B cell (primary cell): ENCODE measurements at regions of chr19 and their contacts with region 1.

Region 1: DNA sequence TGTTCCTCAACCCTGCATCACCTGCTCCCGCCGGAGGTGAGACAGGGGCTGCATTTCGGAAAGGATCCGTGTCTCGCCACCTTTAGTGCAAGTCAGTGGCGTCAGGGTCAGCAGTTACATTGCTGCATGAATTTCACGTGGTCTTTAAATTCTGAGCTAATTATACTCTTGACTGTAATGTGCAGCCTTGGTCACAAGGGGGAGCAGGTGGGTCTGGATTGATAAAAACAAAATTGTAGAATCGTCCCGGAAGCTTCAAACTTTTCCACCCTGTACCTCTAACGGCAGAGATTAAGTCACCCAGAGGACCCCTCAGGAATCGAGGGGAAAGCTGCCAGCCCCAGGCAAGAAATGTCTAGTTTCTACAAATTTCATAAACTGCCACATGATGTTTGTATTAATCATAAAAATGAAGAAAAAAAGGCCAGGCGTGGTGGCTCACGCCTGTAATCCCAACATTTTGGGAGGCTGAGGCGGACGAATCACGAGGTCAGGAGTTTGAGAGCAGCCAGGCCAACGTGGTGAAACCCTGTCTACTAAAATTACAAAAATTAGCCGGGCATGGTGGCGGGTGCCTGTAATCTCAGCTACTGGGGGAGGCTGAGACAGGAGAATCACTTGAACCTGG is 20.2 kb downstream of the BBC3 start:
- DNase-seq: peak; percentile 85
- ATAC-seq: peak; percentile 93
- H3K4me3 ChIP-seq: no peak overlapping the region
- H3K4me3 Mint-ChIP-seq: no peak overlapping the region
- H3K27ac ChIP-seq: peak overlapping the region in 1 of 2 donors; percentile 31
- H3K27ac Mint-ChIP-seq: peak overlapping the region; percentile 23
- H3K4me1 ChIP-seq: peaks cover 6 to 8% of the 10 kb centered on the region in 2 donors
- H3K4me1 Mint-ChIP-seq: peaks cover 6% of the 10 kb centered on the region
- H3K27me3 ChIP-seq: no peaks in the 10 kb centered on the region
- H3K27me3 Mint-ChIP-seq: no peaks in the 10 kb centered on the region
- CTCF ChIP-seq: peak; percentile 84

Region 2: DNA sequence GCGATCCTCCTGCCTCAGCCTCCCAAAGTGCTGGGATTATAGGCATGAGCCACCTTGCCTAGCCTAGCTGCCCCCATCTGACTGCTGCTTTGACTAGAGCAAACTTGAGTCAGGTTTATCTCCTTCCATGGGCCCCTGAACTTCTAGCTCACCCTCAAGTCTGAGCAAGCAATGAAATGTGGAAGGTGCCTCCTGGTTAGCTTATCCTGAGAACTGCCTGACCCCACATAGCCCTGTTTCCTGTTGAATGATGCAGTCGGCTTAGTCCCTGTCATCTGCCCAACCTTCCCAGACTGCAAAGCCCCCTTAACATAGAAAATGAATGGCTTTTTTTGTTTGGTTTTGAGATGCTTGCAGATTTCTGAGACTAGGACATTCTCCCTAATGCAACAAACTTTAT is 153.5 kb before region 1 on chr19:
- CTCF ChIA-PET with region 1: no interaction called
- POLR2A ChIA-PET with region 1: no interaction called
- intact Hi-C with region 1: no loop called
- DNase-seq: no peak
- ATAC-seq: no peak
- H3K4me3 ChIP-seq: no peak overlapping the region
- H3K4me3 Mint-ChIP-seq: no peak overlapping the region
- H3K27ac ChIP-seq: no peak overlapping the region
- H3K27ac Mint-ChIP-seq: no peak overlapping the region
- H3K4me1 ChIP-seq: no peaks in the 10 kb centered on the region
- H3K4me1 Mint-ChIP-seq: no peaks in the 10 kb centered on the region
- H3K27me3 ChIP-seq: no peaks in the 10 kb centered on the region
- H3K27me3 Mint-ChIP-seq: peaks cover 4% of the 10 kb centered on the region
- CTCF ChIP-seq: no peak

Region 3: DNA sequence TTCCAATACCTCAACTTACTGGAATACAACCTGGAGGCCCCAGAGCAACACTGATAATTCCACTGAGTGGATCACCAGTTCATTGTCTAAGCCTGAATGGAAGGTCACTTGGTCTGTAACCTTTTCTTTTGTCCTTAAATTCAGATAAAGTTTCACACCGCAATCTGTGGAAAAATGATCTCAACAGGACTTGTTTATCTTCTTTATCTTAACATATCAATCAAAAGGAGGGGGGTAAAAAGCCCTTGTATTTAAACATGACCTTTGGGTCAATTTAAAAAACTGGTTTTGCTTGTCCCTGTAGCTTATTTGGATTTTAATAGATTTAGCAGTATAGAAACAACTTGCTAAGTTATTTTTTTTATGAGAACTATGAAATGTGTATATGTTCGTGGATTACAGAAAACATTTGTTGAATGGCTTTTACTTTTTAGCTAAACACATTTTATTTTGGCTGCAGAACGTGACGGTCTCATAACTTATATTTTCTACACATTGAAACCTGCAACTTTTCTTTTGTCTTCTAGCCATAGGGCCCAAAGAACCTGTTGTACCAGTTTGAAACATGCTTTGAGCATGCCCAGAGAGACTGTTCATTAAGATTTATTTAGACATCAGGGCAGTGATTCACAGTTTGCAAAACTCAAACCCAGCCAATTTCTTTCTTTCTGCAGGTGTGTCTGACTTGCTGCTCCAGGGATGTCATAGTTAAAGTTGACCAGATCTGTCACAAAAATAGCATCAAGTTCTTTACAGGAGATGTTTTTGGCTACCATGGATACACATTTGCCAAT is 58.4 kb before region 1 on chr19:
- CTCF ChIA-PET with region 1: interaction called, 32 read pairs
- POLR2A ChIA-PET with region 1: interaction called, 3 read pairs
- intact Hi-C with region 1: no loop called
- DNase-seq: no peak
- ATAC-seq: no peak
- H3K4me3 ChIP-seq: no peak overlapping the region
- H3K4me3 Mint-ChIP-seq: no peak overlapping the region
- H3K27ac ChIP-seq: no peak overlapping the region
- H3K27ac Mint-ChIP-seq: no peak overlapping the region
- H3K4me1 ChIP-seq: peaks cover 11 to 16% of the 10 kb centered on the region in 2 donors
- H3K4me1 Mint-ChIP-seq: peaks cover 13% of the 10 kb centered on the region
- H3K27me3 ChIP-seq: no peaks in the 10 kb centered on the region
- H3K27me3 Mint-ChIP-seq: no peaks in the 10 kb centered on the region
- CTCF ChIP-seq: no peak

Region 4: DNA sequence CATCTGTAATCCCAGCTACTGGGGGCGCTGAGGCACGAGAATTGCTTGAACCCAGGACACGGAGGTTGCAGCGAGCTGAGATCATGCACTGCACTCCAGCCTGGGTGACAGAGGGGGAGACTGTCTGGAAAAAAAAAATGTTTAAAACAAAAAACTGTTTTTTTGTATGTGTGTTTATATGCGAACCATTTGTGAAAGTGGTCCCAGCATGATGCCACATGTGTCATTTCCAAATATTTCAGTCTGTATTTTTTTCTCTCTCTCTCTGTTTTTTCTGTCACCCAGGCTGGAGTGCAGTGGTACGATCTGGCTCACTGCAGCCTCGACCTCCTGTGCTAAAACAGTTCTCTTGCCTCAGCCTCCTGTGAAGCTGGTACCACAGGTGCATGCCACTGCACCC is 42.7 kb before region 1 on chr19:
- CTCF ChIA-PET with region 1: no interaction called
- POLR2A ChIA-PET with region 1: no interaction called
- intact Hi-C with region 1: no loop called
- DNase-seq: no peak
- ATAC-seq: no peak
- H3K4me3 ChIP-seq: no peak overlapping the region
- H3K4me3 Mint-ChIP-seq: no peak overlapping the region
- H3K27ac ChIP-seq: no peak overlapping the region
- H3K27ac Mint-ChIP-seq: no peak overlapping the region
- H3K4me1 ChIP-seq: no peaks in the 10 kb centered on the region
- H3K4me1 Mint-ChIP-seq: no peaks in the 10 kb centered on the region
- H3K27me3 ChIP-seq: no peaks in the 10 kb centered on the region
- H3K27me3 Mint-ChIP-seq: no peaks in the 10 kb centered on the region
- CTCF ChIP-seq: no peak

Region 5: DNA sequence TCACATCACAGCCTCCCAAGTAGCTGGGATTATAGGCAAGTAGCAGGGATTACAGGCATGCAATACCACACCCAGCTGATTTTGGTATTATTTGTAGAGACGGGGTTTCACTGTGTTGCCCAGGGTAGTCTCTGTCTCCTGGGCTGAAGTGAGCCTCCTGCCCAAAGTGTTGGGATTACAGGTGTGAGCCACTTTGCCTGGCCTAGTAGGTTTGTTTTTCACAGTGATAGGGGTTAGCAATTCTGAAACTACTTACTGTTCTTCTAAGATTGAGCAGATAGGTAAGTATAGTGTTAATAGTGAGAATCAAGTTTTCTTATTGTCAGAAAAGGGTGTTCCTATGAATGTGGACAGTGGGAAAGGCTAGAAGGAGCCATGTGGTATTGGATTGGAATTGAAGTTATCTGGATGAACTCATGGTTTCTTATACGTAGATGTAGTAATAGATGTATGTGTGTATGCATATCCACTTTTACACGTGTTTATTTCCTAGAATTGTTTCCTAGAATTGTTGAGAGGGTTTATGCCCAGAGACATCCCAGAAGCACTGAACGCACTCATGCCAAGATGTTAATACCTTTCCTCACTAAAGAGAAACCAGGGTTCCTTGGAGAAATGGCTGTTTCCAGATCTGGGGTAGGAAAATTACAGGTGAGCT is 31.0 kb before region 1 on chr19:
- CTCF ChIA-PET with region 1: interaction called, 10 read pairs
- POLR2A ChIA-PET with region 1: no interaction called
- intact Hi-C with region 1: no loop called
- DNase-seq: no peak
- ATAC-seq: no peak
- H3K4me3 ChIP-seq: no peak overlapping the region
- H3K4me3 Mint-ChIP-seq: no peak overlapping the region
- H3K27ac ChIP-seq: no peak overlapping the region
- H3K27ac Mint-ChIP-seq: no peak overlapping the region
- H3K4me1 ChIP-seq: peaks cover 0 to 3% of the 10 kb centered on the region in 2 donors
- H3K4me1 Mint-ChIP-seq: peaks cover 10% of the 10 kb centered on the region
- H3K27me3 ChIP-seq: no peaks in the 10 kb centered on the region
- H3K27me3 Mint-ChIP-seq: no peaks in the 10 kb centered on the region
- CTCF ChIP-seq: no peak

Region 6: DNA sequence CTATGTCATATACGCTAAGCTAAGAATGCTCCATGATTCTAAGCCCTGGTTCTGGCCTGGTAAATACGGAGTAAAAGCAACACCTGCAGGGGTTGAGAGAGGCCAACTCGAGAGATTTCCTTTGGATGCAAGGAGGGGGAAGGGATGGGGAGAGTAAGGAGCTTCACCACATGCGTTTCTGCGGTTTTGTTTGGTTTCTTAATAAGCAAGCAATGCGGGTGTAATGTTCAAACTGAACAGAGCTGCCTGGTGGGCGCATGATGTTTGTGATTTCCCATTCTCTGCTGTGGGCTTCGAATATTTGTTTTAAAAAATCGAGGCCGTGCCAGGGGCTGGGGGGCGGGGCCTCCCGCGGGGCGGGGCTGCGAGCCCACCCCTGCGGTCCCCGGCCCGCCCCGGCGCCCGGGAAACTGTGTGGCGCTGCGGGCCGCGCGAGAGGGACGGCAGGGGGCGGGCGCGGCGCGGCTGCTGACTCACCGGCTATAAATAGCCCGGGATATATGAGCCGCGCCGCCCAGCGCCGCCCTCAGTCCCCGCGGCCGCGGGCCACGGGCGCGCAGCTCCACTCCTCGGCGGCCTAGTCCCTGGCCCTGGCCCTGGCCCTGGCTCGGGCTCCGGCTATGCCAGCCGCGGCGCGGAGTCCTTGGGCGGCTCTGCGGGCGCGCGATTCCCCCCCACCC is 15.1 kb after region 1 on chr19:
- CTCF ChIA-PET with region 1: interaction called, 90 read pairs
- POLR2A ChIA-PET with region 1: interaction called, 10 read pairs
- intact Hi-C with region 1: loop called (anchors 2 kb)
- DNase-seq: peak; percentile 93
- ATAC-seq: peak; percentile 62
- H3K4me3 ChIP-seq: peak overlapping the region in 4 of 5 experiments; percentile 42 to 95 (median 56)
- H3K4me3 Mint-ChIP-seq: peak overlapping the region; percentile 90
- H3K27ac ChIP-seq: peak overlapping the region; percentile 82 to 93
- H3K27ac Mint-ChIP-seq: peak overlapping the region; percentile 95
- H3K4me1 ChIP-seq: peaks cover 41 to 46% of the 10 kb centered on the region in 2 donors
- H3K4me1 Mint-ChIP-seq: peaks cover 15% of the 10 kb centered on the region
- H3K27me3 ChIP-seq: peaks cover 0 to 31% (median 1%) of the 10 kb centered on the region in 4 experiments
- H3K27me3 Mint-ChIP-seq: no peaks in the 10 kb centered on the region
- CTCF ChIP-seq: peak; percentile 50

Region 7: DNA sequence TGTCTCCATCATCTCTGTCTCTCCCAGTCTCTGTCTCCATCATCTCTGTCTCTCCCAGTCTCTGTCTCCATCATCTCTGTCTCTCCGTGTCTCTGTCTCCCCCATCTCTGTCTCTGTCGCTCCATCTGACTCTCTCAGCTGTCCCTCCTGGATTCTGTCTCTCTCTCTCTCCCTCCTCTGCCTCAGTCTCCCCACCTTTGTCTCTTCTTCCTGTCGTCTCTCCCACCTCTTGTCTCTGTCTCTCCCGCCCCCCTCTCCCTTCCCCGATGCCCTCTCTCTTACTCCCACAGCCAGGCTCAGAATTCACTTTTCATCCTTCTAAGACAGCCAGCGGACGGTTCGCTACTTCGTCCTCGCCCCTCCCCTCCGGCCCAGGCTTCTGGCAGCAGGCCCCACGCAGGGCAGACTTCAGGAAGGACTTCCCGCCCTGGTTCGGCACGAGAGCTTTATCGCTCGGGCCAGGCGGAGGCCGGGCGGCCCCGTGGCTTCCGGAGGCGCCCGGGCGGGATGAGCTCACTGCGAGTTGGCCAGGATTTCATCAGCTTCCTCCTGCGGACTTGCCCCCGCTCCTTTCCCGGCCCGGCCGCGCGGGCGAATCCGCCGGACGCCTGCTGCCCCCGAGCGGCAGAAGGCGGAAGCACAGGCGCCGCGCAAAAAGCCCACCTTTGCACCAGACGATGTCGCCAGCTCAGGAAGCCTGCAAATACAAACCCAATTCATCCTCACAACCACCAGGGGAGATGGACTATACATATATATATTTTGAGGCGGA is 33.2 kb after region 1 on chr19:
- CTCF ChIA-PET with region 1: interaction called, 557 read pairs
- POLR2A ChIA-PET with region 1: interaction called, 19 read pairs
- intact Hi-C with region 1: loop called (anchors 1 kb)
- DNase-seq: peak; percentile 93
- ATAC-seq: peak; percentile 71
- H3K4me3 ChIP-seq: peak overlapping the region in 4 of 5 experiments; percentile 12 to 27 (median 14)
- H3K4me3 Mint-ChIP-seq: peak overlapping the region; percentile 64
- H3K27ac ChIP-seq: no peak overlapping the region
- H3K27ac Mint-ChIP-seq: peak overlapping the region; percentile 68
- H3K4me1 ChIP-seq: peaks cover 50% of the 10 kb centered on the region in 2 donors
- H3K4me1 Mint-ChIP-seq: peaks cover 32% of the 10 kb centered on the region
- H3K27me3 ChIP-seq: peaks cover 0 to 55% (median 23%) of the 10 kb centered on the region in 4 experiments
- H3K27me3 Mint-ChIP-seq: peaks cover 17% of the 10 kb centered on the region
- CTCF ChIP-seq: peak; percentile 98

Region 8: GRCh38 chr19:47273313-47273977 is 62.6 kb after region 1 on chr19:
- CTCF ChIA-PET with region 1: interaction called, 12 read pairs
- POLR2A ChIA-PET with region 1: interaction called, 3 read pairs
- intact Hi-C with region 1: no loop called
- DNase-seq: peak; percentile 91
- ATAC-seq: peak; percentile 56
- H3K4me3 ChIP-seq: peak overlapping the region; percentile 54 to 99 (median 96)
- H3K4me3 Mint-ChIP-seq: peak overlapping the region; percentile 97
- H3K27ac ChIP-seq: peak overlapping the region; percentile 94 to 98
- H3K27ac Mint-ChIP-seq: peak overlapping the region; percentile 99
- H3K4me1 ChIP-seq: peaks cover 12 to 22% of the 10 kb centered on the region in 2 donors
- H3K4me1 Mint-ChIP-seq: peaks cover 22% of the 10 kb centered on the region
- H3K27me3 ChIP-seq: no peaks in the 10 kb centered on the region
- H3K27me3 Mint-ChIP-seq: no peaks in the 10 kb centered on the region
- CTCF ChIP-seq: no peak